Mammary epithelial cell (primary cell): ENCODE measurements at regions of chrX and their contacts with region 1.

Region 1: DNA sequence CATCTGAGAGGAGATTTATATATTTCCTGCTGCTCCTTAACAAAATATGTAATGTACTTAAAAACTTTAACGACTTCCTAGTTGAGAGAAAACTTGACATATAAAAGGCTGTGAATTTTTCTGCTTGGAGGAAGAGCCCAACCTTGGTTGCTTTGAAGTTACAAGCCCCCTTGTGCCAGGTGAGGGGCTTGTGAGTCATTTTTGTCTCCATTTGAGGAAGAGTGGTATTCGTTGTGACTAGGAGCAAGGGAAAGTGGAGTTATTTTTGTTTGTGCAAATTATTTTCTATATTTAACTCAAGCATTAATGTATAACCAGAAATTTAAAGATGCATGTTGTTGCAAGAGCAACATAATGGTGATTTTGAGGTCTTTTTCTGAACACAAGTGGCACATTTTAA is 99.0 kb upstream of the DDX3X start:
- DNase-seq: no peak
- H3K4me3 ChIP-seq: no peak overlapping the region
- H3K27ac ChIP-seq: no peak overlapping the region
- H3K4me1 ChIP-seq: peaks cover 10% of the 10 kb centered on the region
- H3K27me3 ChIP-seq: no peaks in the 10 kb centered on the region
- CTCF ChIP-seq: no peak

Region 2: DNA sequence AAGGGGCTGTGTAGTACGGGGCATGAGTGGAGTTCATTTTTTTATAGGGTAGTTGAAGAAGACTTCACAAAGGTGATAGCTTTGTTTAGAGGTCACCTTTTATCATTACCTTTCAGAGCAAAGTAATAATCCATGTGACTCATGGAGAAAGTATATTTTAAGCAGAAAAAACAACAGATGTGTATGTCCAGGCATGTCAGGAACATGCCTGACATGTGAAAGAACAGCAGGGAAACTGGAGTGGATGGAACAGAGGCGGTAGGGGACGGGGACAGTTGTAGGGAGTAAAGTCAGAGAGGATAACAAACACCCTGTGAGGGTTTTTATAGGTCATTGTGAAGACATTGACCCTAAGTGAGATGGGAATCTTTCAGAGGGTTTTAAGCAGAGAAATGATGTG is 42.1 kb before region 1 on chrX:
- CTCF ChIA-PET with region 1: no interaction called
- dilution Hi-C with region 1: no loop called
- in situ Hi-C with region 1: no loop called
- intact Hi-C with region 1: loop called (anchors 5 kb)
- DNase-seq: peak; percentile 60
- H3K4me3 ChIP-seq: no peak overlapping the region
- H3K27ac ChIP-seq: peak overlapping the region; percentile 8
- H3K4me1 ChIP-seq: peaks cover 10% of the 10 kb centered on the region
- H3K27me3 ChIP-seq: no peaks in the 10 kb centered on the region
- CTCF ChIP-seq: no peak